ENCODE measurements at regions of chr5 and their contacts with region 1.

Region 1: GRCh38 chr5:163347671-163348070 is 89.7 kb upstream of the CCNG1 start:
- DNase-seq: peak; percentile 19
- H3K4me3 Mint-ChIP-seq: no peak overlapping the region
- H3K27ac Mint-ChIP-seq: no peak overlapping the region
- H3K4me1 Mint-ChIP-seq: no peaks in the 10 kb centered on the region
- H3K27me3 Mint-ChIP-seq: peaks cover 6% of the 10 kb centered on the region

Region 2: DNA sequence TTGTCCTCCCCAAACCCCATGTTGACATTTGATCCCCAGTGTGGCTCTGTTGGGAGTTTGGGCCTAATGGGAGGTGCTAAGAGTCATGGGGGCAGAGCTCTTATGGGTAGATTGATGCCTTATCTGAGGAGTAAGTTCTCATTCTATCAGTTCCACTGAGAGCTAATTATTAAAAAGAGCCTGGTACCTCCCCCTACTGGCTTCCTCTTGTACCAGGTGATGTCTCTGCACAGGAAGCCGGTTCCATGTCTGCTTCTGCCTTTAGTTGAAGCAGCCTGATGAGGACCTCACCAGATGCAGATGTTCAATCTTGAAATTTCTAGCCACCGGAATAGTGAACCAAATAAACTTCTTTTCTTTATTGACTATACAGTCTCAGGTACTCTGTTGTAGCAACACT is 1811.9 kb before region 1 on chr5:
- intact Hi-C with region 1: no loop called
- DNase-seq: no peak
- H3K4me3 Mint-ChIP-seq: no peak overlapping the region
- H3K27ac Mint-ChIP-seq: no peak overlapping the region
- H3K4me1 Mint-ChIP-seq: no peaks in the 10 kb centered on the region
- H3K27me3 Mint-ChIP-seq: peaks cover 2% of the 10 kb centered on the region

Region 3: DNA sequence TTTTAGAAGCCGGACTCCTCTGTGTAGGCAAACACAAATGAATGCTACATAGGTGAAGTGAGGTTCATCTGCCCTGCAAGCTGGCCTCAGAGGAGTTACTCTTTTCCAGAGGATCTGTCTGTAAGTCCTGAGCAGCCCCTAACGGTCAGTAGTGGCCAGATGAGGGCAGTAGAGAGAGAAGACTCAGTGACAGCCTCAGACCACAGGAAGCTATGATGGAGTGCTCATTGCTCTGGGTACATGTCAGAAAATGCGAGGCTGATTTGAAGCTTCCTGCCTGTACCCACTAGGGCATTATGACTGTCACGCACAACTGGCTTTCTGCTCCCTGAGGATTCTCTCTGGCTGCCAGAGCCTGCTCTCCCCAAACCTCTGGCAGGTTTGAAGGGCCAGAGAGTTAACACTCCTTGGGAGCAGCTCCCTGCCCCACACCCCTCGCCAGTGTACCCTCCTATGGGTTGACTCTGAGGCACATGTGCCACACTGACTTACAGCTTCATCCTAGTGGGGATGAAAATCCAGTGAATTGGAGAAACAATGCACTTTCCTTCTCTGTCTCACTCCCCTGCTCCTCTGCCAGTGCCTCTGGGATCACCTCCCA is 1138.6 kb before region 1 on chr5:
- intact Hi-C with region 1: loop called (anchors 5 kb)
- DNase-seq: no peak
- H3K4me3 Mint-ChIP-seq: no peak overlapping the region
- H3K27ac Mint-ChIP-seq: no peak overlapping the region
- H3K4me1 Mint-ChIP-seq: no peaks in the 10 kb centered on the region
- H3K27me3 Mint-ChIP-seq: no peaks in the 10 kb centered on the region

Region 4: GRCh38 chr5:163306421-163306820 is 41.2 kb before region 1 on chr5:
- intact Hi-C with region 1: loop called (anchors 1 kb)
- DNase-seq: no peak
- H3K4me3 Mint-ChIP-seq: no peak overlapping the region
- H3K27ac Mint-ChIP-seq: no peak overlapping the region
- H3K4me1 Mint-ChIP-seq: peaks cover 14% of the 10 kb centered on the region
- H3K27me3 Mint-ChIP-seq: peaks cover 6% of the 10 kb centered on the region

Measured in activated T-helper 1 cell treated with anti-CD3 and anti-CD28 coated beads, Interleukin-12 subunit alpha, Interleukin-12 subunit beta, Interleukin-2, Interleukin-4 antibody, amounts not matched to agents 30 ng/mL and 10 ng/mL and 1 ng/mL, durations not matched to agents 14 hours and 24 hours and 36 hours (primary cell).